ENCODE measurements at regions of chr1 and their contacts with region 1.

Region 1: GRCh38 chr1:91929250-91929649 is 20.0 kb upstream of the BRDT start:
- DNase-seq: no peak
- ATAC-seq: no peak
- H3K4me3 ChIP-seq: no peak overlapping the region
- H3K4me1 ChIP-seq: no peaks in the 10 kb centered on the region
- CTCF ChIP-seq: no peak

Region 2: GRCh38 chr1:91511386-91511785 is 417.9 kb before region 1 on chr1:
- intact Hi-C with region 1: loop called (anchors 2 to 5 kb)
- DNase-seq: no peak
- ATAC-seq: no peak
- H3K4me3 ChIP-seq: no peak overlapping the region
- H3K4me1 ChIP-seq: no peaks in the 10 kb centered on the region
- CTCF ChIP-seq: peak; percentile 17

Region 3: DNA sequence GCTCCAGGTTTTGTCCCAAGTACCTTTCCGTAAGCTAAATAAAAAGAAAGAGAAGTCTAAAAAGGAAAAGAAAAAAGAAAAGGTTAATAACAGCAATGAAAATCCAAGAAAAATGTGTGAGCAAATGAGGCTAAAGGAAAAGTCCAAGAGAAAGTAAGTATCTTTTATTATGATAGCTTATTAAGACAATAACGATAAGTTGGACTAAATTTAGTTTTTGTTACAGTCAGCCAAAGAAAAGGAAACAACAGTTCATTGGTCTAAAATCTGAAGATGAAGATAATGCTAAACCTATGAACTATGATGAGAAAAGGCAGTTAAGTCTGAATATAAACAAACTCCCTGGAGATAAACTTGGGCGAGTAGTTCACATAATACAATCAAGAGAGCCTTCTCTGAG is 51.4 kb after region 1 on chr1:
- intact Hi-C with region 1: no loop called
- DNase-seq: no peak
- ATAC-seq: no peak
- H3K4me3 ChIP-seq: no peak overlapping the region
- H3K4me1 ChIP-seq: no peaks in the 10 kb centered on the region
- CTCF ChIP-seq: no peak

Region 4: DNA sequence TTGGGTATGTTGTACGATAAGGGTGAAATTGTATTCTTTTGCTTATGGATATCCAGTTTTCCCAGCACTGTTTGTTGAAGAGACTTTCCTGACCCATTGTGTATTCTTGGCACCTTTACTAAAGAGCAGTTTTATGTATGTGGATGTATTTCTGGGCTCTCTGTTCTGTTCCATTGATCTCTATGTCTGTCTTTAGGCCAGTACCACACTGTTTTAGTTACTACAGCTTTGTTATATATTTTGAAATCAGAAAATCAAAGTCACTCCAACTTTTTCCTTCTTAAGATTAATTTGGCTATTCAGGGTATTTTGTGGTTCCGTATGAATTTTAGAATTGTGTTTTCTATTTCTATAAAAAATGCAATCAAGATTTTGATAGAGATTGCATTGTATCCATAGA is 225.7 kb after region 1 on chr1:
- intact Hi-C with region 1: no loop called
- DNase-seq: no peak
- ATAC-seq: no peak
- H3K4me3 ChIP-seq: no peak overlapping the region
- H3K4me1 ChIP-seq: no peaks in the 10 kb centered on the region
- CTCF ChIP-seq: no peak

Measured in mucosa of descending colon (tissue), 3 donors.